Left ventricle myocardium inferior (tissue), 1 donor: ENCODE measurements at regions of chr3 and their contacts with region 1.

Region 1: DNA sequence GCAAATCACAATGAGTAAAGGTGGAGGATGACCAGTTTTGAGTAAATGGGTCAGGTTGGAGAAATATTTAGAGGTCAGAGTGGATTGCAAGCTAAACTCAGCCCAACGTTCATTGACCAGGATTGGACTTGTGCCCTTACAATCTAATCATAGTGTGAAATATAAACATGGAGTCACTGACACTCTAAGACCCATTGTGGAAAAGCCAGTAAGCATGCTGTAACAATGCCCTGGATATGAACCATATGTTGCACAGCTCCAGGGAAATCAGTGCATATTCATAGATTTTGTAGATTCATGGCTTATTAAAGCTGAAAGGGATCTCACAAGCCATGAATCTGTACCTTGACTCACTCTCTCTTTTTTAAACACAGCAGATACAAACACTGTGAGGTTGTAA is 660.2 kb upstream of the LMCD1 start:
- DNase-seq: no peak
- H3K4me3 ChIP-seq: no peak overlapping the region
- H3K27ac ChIP-seq: no peak overlapping the region
- H3K4me1 ChIP-seq: no peaks in the 10 kb centered on the region
- H3K27me3 ChIP-seq: no peaks in the 10 kb centered on the region
- CTCF ChIP-seq: no peak

Region 2: GRCh38 chr3:8223766-8224165 is 382.3 kb after region 1 on chr3:
- intact Hi-C with region 1: loop called (anchors 10 kb)
- DNase-seq: no peak
- H3K4me3 ChIP-seq: no peak overlapping the region
- H3K27ac ChIP-seq: no peak overlapping the region
- H3K4me1 ChIP-seq: peaks cover 10% of the 10 kb centered on the region
- H3K27me3 ChIP-seq: no peaks in the 10 kb centered on the region
- CTCF ChIP-seq: no peak